Activated T-helper 2 cell treated with anti-CD3 and anti-CD28 coated beads, Interferon-gamma antibody, Interleukin-2, Interleukin-4, amounts not matched to agents 10 μg/mL and 5 μg/mL and 100 μg/mL, durations not matched to agents 14 hours and 24 hours and 36 hours (primary cell): ENCODE measurements at regions of chr7 and their contacts with region 1.

Region 1: DNA sequence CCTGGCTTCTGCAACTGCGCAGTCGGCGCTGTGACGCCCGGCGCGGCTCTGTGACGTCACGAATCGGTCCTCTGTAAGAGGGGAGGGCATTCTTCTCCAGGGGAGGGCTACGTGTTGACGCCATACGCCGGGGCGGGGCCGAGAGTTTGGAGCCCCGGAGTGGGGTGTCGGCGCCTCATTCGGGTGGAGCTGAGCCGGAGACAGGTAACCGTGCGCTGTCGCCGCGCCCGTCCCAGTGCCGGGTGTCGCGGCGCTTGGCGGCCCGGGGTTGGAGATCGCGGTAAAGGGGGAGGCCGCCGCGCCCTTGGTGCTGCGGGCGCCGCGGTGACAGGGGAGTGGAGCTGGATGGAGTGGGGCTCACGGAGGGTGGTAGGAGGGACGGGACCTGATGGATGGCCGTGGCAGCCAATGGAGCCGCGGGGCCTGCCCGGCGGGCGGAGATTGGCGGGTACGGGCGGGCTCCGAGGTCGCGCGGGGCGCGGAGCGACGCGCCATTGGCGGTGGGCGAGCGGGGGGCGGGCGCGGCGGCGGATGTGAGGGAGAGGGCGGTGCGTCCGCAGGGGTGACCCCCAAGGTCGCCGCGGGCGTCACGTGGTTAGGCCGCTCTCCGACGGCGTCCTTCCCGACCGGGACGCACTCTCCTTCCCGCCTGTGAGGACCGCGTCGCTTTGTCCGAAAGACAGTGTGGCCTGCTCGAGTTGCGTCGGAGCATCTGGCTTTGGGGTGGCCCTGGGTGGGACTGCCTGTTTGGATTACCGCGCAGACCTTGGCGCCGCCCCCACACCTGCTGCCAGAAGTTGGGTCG is at the start of gene OGDH:
- DNase-seq: peak; percentile 98
- H3K4me3 Mint-ChIP-seq: peak within 1 kb of the TSS; percentile 99
- H3K27ac Mint-ChIP-seq: peak within 1 kb of the TSS; percentile 100
- H3K4me1 Mint-ChIP-seq: peaks cover 23% of the 10 kb centered on the region
- H3K27me3 Mint-ChIP-seq: peaks cover 5% of the 10 kb centered on the region
- total RNA-seq, gene OGDH: 105 and 109 TPM in 2 replicates

Region 2: GRCh38 chr7:44622307-44623151 is 15.9 kb after region 1 on chr7:
- intact Hi-C with region 1: loop called (anchors 1 kb)
- DNase-seq: no peak
- H3K4me3 Mint-ChIP-seq: peak overlapping the region; percentile 57
- H3K27ac Mint-ChIP-seq: peak overlapping the region; percentile 91
- H3K4me1 Mint-ChIP-seq: peaks cover 74% of the 10 kb centered on the region
- H3K27me3 Mint-ChIP-seq: no peaks in the 10 kb centered on the region

Region 3: DNA sequence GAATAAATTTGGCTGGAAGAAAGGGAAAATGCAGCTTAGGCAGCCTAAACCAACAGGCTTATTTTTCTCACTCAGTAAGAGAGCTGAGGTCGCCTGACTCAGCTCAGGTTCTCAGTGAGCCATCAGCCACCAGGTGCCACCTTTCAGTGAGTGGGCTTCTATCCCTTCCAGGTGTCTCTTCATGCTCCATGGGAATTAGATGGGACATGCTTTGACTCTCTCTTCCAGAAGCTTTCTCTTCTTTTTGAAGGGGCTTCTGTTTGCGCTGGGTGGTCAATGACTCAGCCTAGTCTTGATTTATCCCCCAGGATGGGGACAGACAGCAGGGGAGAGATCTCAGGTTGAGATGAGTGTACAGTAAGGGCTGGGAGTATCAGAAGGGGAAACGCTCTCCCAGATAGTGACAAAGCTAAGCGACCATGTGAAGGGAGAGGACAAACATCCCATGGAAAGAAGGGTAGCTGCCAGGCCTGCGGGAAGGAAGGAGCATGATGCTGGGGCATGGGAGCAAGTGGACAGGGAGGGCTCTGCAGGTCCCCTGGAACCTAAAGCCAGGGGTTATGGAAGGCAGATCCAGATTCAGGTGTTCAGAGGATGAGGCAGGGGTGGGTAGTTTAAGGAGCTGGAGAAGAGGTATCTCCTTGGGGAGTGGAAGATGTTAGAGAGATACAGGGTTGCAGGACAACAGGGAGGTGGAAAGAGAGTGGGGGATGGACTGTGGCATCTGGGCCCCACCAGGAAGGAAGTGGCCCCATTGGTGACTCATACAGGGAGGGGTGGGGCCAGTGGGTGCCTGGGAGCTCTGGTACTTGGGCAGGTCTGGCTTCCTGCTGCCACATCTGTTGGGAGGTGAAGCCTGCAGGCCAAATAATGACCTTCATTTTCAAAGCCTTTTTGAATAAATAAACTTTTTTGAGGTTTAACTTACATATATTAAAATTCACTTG is 32.2 kb after region 1 on chr7:
- intact Hi-C with region 1: loop called (anchors 1 kb)
- DNase-seq: peak; percentile 84
- H3K4me3 Mint-ChIP-seq: peak overlapping the region; percentile 79
- H3K27ac Mint-ChIP-seq: peak overlapping the region; percentile 99
- H3K4me1 Mint-ChIP-seq: peaks cover 70% of the 10 kb centered on the region
- H3K27me3 Mint-ChIP-seq: no peaks in the 10 kb centered on the region

Region 4: DNA sequence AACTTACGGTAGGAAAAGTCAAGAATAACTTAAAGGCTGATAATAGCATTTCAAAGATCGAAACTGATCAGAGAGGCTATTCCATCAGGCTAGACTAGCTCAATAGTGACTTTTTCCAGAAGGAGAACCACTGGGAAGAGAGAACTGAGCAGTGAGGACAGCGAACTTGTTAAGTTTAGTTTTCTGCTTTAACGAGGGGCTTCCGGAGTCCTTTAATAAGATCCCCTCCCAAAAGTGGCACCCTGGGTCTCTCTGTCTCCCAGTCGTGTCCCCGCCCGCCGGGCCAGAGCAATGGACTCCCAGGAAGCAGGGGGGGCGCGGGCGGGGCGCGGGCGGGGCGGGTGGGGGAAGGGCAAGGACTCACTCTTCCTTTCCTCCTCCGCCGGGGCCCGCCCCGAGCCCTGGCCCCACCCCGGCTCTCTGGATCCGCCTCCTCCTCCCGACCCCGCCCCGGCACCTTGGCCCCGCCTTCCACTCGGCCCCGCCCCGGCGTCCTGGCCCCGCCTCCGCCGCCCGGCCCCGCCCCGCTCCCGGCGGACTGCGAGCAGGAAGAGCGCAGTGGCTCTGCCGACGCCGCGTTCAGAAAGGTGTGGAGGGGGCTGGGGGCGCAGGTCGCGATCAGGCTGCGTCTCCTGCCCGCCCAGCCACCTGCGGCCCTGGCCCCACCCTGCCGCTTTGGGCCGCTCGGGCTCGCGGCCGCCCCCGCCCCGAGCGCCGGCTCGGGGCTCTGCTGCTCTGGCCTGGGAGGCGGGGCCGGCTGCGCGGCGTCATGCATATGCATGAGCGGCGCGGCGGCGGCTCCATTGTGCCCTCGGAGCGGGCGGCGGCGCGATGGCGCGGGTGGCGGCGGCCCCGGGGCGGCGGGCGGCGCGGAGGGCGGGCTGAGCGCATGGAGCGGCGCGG is 141.6 kb after region 1 on chr7 and contains the start of gene ZMIZ2:
- intact Hi-C with region 1: loop called (anchors 1 kb)
- DNase-seq: peak; percentile 87
- H3K4me3 Mint-ChIP-seq: peak within 1 kb of the TSS; percentile 85
- H3K27ac Mint-ChIP-seq: peak within 1 kb of the TSS; percentile 94
- H3K4me1 Mint-ChIP-seq: peaks cover 31% of the 10 kb centered on the region
- H3K27me3 Mint-ChIP-seq: no peaks in the 10 kb centered on the region
- total RNA-seq, gene ZMIZ2: 105 TPM in 2 replicates

Region 5: DNA sequence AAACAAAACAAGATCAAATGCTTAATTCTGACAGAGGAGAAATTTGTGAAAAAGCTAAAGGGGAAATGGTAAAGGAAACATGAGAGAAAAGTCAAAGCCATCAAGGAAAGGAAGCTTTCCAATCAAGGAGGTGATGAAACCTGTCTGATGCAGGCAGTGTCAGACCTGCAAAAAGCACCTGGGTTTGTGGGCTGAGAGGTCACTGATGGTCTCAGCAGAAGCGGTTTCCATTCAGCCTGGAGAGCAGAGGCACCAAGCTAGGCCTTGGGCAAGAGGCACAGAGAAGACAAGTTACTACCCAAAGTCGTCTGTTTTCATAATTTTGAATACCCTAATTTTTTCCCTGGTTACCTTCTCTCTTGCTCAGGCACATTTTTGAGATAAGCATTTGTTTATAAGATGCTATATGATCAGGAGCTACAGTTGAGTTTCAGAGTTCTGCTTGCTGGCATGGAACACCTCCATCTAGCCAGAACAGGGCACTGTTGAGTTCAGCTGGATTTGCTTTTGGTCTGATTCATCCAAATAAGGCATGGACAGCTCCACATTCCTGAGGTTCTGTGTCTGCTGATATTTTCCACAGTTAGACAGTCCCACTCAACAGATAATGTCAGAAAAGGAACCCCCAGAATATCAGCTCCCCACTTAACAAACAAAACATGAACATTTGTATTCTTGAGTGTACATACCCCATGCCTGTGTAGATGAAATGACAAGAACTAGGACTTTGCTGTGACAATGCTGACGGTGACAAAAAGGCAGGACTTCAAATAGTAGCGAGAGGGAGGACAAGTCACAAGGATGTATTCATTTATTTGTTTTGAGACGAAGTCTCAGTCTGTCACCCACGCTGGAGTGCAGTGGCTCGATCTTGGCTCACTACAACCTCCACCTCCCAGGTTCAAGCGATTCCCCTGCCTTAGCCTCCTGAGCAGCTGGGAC is 184.9 kb after region 1 on chr7:
- intact Hi-C with region 1: no loop called
- DNase-seq: no peak
- H3K4me3 Mint-ChIP-seq: no peak overlapping the region
- H3K27ac Mint-ChIP-seq: no peak overlapping the region
- H3K4me1 Mint-ChIP-seq: no peaks in the 10 kb centered on the region
- H3K27me3 Mint-ChIP-seq: no peaks in the 10 kb centered on the region